AG04449 (cell line): ENCODE measurements at regions of chr10 and their contacts with region 1.

Region 1: GRCh38 chr10:48551861-48552591 is 52.8 kb downstream of the ARHGAP22 start:
- DNase-seq: no peak
- H3K4me3 ChIP-seq: no peak overlapping the region
- CTCF ChIP-seq: peak; percentile 68

Region 2: GRCh38 chr10:48363617-48364355 is 188.2 kb before region 1 on chr10:
- CTCF ChIA-PET with region 1: interaction called, 38 read pairs
- POLR2A ChIA-PET with region 1: no interaction called
- DNase-seq: no peak
- H3K4me3 ChIP-seq: no peak overlapping the region
- CTCF ChIP-seq: peak; percentile 55

Region 3: GRCh38 chr10:48533951-48534720 is 17.9 kb before region 1 on chr10:
- CTCF ChIA-PET with region 1: interaction called, 153 read pairs
- POLR2A ChIA-PET with region 1: no interaction called
- DNase-seq: no peak
- H3K4me3 ChIP-seq: no peak overlapping the region
- CTCF ChIP-seq: no peak

Region 4: GRCh38 chr10:48564466-48565160 is 12.6 kb after region 1 on chr10:
- CTCF ChIA-PET with region 1: interaction called, 11 read pairs
- POLR2A ChIA-PET with region 1: no interaction called
- DNase-seq: no peak
- H3K4me3 ChIP-seq: no peak overlapping the region
- CTCF ChIP-seq: no peak

Region 5: GRCh38 chr10:48577158-48577557 is 25.1 kb after region 1 on chr10:
- CTCF ChIA-PET with region 1: interaction called, 11 read pairs
- POLR2A ChIA-PET with region 1: no interaction called
- DNase-seq: no peak
- H3K4me3 ChIP-seq: no peak overlapping the region
- CTCF ChIP-seq: no peak

Region 6: GRCh38 chr10:48913674-48914073 is 361.6 kb after region 1 on chr10:
- CTCF ChIA-PET with region 1: no interaction called
- POLR2A ChIA-PET with region 1: no interaction called
- DNase-seq: no peak
- H3K4me3 ChIP-seq: no peak overlapping the region
- CTCF ChIP-seq: no peak